Activated CD4-positive, alpha-beta T cell treated with anti-CD3 and anti-CD28 coated beads, Interleukin-2, amount 10 ng/mL, durations not matched to agents 24 days and 14 days (primary cell): ENCODE measurements at regions of chr19 and their contacts with region 1.

Region 1: DNA sequence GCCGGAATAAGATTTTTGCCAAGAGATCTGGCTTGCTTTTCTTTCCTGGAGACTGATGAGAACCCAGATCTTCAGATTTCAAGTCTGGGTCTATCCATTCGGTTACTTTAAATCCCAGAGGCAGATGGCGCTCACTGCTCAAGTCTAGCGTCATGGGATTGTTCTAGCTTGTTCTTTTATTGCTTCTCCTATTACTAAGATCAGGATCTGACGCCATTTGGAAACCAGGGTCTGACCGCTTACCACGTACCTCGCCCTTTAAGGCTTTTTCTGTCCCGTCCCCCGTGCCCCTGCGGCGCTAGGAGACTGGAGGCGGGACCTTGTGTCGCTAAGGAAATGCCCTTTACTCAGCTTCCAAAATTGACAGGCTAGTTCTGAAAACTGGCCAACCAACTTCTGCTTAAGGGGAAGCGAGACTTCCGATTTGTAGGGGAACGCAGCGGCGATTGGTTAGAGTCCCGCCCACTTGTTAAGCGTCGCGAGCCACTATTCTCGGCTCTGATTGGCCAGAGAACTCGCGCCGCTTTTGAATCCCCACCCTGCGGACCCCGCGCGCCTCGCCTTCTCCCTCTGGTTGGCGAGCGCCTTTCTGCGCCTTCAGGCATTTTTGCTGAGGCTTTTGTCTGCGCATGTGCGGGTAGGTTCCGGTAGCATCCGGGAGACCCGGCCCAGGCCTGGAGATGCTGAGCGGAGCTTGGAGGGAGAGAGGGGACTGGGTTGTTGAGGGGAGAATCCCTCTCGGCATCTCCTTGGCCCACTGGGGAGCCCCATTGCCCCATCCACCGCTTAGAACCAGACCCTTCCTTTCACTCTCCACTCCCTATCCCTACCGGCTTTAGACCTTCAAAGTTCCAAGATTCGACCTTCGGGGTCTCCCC is 3.8 kb upstream of the C19orf84 start:
- DNase-seq: peak; percentile 98
- H3K4me3 Mint-ChIP-seq: peak overlapping the region; percentile 94
- H3K27ac Mint-ChIP-seq: peak overlapping the region; percentile 96
- H3K4me1 Mint-ChIP-seq: peaks cover 52% of the 10 kb centered on the region
- H3K27me3 Mint-ChIP-seq: no peaks in the 10 kb centered on the region

Region 2: GRCh38 chr19:51259348-51260245 is 134.6 kb before region 1 on chr19:
- intact Hi-C with region 1: loop called (anchors 10 kb)
- DNase-seq: peak; percentile 89
- H3K4me3 Mint-ChIP-seq: no peak overlapping the region
- H3K27ac Mint-ChIP-seq: no peak overlapping the region
- H3K4me1 Mint-ChIP-seq: peaks cover 33% of the 10 kb centered on the region
- H3K27me3 Mint-ChIP-seq: peaks cover 16% of the 10 kb centered on the region

Region 3: DNA sequence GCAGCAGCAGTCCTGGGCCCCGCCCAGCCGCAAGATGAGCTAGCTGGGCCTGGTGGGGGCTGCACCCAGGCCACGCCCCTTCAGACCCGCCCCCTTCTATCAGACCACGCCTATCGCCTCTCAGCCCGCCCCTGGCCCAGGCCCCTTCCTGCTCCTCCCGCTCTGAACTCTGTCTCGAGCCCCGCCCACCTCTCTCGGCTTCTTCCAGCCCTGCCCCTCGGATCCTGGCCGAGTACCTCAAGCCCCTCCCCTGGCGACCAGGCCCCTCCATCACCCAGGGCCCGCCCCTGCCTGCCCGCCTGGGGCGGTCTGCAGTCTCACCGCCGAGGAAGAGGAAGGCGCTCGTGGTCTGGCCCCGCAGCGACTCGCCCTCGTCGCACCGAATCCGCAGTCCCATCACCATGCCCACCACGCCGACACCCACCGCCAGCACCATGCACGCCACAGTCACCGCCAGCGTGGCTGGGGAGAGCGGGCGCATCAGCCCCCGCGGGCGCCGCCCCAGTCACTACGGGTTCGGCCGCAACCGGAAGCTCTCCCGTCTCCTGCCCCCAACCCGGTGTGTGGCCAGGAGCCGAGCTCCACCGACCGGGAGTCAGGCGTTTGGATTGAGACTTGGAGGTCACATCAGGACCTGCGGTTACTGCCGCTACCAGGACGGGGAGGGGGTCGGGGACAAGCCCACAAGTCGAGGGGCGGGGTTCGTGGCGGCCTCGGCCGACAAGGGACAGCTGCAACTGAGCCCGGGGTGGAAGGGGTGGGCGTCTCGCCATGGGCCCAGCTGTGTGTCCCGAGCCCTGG is 26.4 kb before region 1 on chr19:
- intact Hi-C with region 1: loop called (anchors 1 kb)
- DNase-seq: peak; percentile 99
- H3K4me3 Mint-ChIP-seq: peak overlapping the region; percentile 98
- H3K27ac Mint-ChIP-seq: peak overlapping the region; percentile 98
- H3K4me1 Mint-ChIP-seq: peaks cover 57% of the 10 kb centered on the region
- H3K27me3 Mint-ChIP-seq: no peaks in the 10 kb centered on the region

Region 4: GRCh38 chr19:51422053-51422448 is 27.9 kb after region 1 on chr19:
- intact Hi-C with region 1: loop called (anchors 2 kb)
- DNase-seq: peak; percentile 97
- H3K4me3 Mint-ChIP-seq: peak overlapping the region; percentile 44
- H3K27ac Mint-ChIP-seq: peak overlapping the region; percentile 51
- H3K4me1 Mint-ChIP-seq: peaks cover 15% of the 10 kb centered on the region
- H3K27me3 Mint-ChIP-seq: peaks cover 19% of the 10 kb centered on the region

Region 5: GRCh38 chr19:51448011-51448744 is 54.0 kb after region 1 on chr19:
- intact Hi-C with region 1: loop called (anchors 2 kb)
- DNase-seq: peak; percentile 80
- H3K4me3 Mint-ChIP-seq: peak overlapping the region; percentile 71
- H3K27ac Mint-ChIP-seq: peak overlapping the region; percentile 89
- H3K4me1 Mint-ChIP-seq: peaks cover 37% of the 10 kb centered on the region
- H3K27me3 Mint-ChIP-seq: peaks cover 11% of the 10 kb centered on the region